Heart left ventricle (tissue), 16 donors: ENCODE measurements at regions of chr1 and their contacts with region 1.

Region 1: GRCh38 chr1:247131236-247131635 is 27.1 kb upstream of the ZNF669 start:
- DNase-seq: no peak
- ATAC-seq: no peak
- H3K4me3 ChIP-seq: no peak overlapping the region
- H3K27ac ChIP-seq: no peak overlapping the region
- H3K4me1 ChIP-seq: peaks cover 0 to 4% (median 0%) of the 10 kb centered on the region in 12 donors
- H3K27me3 ChIP-seq: no peaks in the 10 kb centered on the region
- CTCF ChIP-seq: no peak
- POLR2A ChIP-seq: no peak

Region 2: DNA sequence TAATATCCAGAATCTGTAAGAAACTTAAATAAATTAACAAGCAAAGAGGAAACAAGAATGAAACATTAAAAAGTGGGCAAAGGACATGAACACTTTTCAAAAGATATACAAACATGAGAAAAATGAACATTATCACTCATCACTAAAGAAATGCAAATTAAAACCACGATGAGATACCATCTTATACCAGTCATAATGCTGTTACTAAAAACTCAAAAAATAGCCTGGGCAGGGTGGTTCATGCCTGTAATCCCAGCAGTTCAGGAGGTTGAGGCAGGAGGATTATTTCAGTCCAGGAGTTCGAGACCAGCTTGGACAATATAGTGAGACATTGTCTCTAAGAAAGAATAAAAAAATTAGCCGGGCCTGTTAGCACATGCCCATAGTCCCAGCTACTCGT is 34.4 kb after region 1 on chr1:
- intact Hi-C with region 1: loop called in 4 of 10 experiments (anchors 2 to 10 kb)
- DNase-seq: no peak
- ATAC-seq: no peak
- H3K4me3 ChIP-seq: no peak overlapping the region
- H3K27ac ChIP-seq: no peak overlapping the region
- H3K4me1 ChIP-seq: no peaks in the 10 kb centered on the region
- H3K27me3 ChIP-seq: no peaks in the 10 kb centered on the region
- CTCF ChIP-seq: no peak
- POLR2A ChIP-seq: no peak

Region 3: DNA sequence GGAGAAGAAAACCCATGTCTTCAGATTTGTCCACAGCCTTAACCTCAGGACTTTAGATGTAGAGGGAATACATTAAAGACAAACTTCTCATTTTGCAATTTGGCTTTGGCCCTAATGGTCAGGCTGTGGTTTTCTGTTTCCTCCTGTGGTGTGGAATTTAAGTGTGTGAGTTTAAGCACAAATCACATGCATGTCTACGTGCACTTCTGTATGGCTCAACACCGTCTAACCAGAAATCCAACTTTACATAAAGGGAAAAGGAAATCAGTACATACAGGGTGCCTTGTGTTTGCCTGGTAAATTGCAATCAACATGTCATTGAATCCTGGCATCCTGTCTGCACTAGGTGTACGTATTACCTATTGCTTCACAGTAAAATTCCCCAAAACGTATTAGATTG is 41.8 kb after region 1 on chr1:
- intact Hi-C with region 1: loop called in 4 of 10 experiments (anchors 2 to 10 kb)
- DNase-seq: no peak
- ATAC-seq: no peak
- H3K4me3 ChIP-seq: no peak overlapping the region
- H3K27ac ChIP-seq: peak overlapping the region in 1 of 12 donors; percentile 6
- H3K4me1 ChIP-seq: peaks cover 0 to 14% (median 0%) of the 10 kb centered on the region in 12 donors
- H3K27me3 ChIP-seq: no peaks in the 10 kb centered on the region
- CTCF ChIP-seq: no peak
- POLR2A ChIP-seq: no peak

Region 4: DNA sequence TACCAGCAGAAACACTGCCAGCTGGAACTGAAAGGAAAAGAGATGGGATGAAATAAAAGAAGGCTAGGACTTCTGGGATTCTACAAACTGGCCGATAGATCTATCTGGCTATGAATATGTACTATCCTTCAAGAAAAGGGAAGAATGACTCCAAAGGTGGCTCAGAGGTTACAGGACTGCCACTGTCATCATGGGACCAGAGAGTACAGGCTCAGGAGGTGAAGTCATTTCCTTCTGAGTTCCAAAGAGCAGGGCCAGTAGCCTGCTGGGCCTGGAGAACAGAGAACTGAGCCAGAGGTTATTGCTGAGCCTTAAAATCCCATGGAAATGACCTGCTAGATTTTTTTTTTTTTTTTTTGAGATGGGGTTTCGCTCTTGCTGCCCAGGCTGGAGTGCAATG is 172.8 kb after region 1 on chr1:
- intact Hi-C with region 1: no loop called
- DNase-seq: no peak
- ATAC-seq: peak in 1 of 4 donors; percentile 78
- H3K4me3 ChIP-seq: no peak overlapping the region
- H3K27ac ChIP-seq: no peak overlapping the region
- H3K4me1 ChIP-seq: no peaks in the 10 kb centered on the region
- H3K27me3 ChIP-seq: no peaks in the 10 kb centered on the region
- CTCF ChIP-seq: no peak
- POLR2A ChIP-seq: no peak